ENCODE measurements at regions of chr5 and their contacts with region 1.

Region 1: DNA sequence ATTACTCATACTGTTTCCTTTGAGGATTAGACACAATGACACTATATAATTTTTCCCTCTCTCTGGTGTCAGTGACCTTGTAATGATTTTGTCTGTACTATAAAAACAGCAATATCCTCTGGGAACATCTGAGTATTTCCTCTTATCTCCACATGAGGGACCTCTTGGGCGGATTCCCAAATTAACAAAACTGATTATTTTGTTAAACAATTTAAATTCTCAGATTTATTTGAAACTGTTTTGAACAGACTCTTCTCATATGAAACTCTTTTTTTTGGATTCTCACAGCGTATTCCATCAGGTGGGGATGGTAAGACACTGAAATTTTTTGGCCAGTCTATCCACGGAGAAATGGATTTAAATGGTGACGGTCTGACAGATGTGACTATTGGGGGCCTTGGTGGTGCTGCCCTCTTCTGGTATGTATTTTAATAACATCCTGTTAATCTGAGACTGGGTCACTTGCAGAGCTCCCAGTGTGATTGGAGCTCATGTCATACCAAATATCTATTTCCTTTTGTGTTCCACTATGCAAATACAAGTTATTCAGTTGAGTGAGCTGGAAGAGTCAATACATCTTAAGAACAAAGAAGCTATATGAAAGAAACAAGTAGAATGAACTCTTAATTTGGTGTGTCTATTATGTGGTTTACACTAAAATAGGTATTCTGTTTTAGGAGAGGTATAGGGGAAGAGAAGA is 73.8 kb upstream of the ITGA2 start:
- DNase-seq: peak; percentile 79
- ATAC-seq: peak; percentile 98
- H3K4me3 ChIP-seq: peak overlapping the region; percentile 6 to 33; a peak in 2 of 4 replicates
- H3K27ac ChIP-seq: no peak overlapping the region
- H3K4me1 ChIP-seq: no peaks in the 10 kb centered on the region; the same call in 1 of the 2 replicates
- H3K27me3 ChIP-seq: no peaks in the 10 kb centered on the region
- CTCF ChIP-seq: peak; percentile 91

Region 2: DNA sequence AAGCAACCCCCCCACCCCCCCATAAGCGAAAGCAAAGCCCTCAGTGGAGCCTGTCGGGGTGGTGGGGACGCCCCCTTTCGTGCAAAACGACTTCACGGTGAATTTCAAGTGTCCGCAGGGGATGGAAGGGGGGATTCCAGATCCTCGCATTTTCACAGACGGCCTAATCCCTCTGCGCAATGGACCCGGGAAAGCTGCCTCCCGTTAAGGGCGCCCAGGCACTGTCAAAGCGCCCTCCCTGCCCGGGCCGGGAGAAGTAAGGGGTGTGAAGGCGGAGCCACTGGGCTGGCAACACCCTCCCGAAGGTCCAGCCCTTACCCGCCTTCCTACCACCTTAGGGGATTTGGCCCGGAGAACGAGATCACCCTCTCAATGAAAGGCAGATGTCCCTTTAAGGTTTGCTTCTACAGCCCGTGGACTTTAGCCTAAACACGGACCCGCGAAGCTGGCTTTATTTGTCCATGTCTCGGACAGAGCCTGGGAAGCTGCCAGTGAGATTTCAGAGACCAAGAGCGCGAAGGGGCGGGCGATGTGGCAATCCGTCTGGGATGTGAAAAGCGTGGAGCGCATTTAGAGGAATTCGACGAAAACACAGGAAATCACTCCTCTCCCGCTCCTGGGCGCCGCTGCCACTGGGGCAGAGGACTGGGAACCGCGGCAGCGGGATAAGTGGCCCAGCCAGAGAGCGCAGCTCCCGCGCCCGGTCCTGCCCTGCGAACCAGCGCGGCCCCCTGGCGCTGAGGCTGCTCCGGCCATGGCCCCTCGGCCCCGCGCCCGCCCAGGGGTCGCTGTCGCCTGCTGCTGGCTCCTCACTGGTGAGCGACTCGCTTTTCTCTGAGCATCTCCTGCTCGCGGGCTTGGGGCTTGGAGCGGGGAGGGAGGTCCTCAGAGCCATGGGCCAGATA is 127.5 kb before region 1 on chr5 and contains the starts of genes ITGA1 and PELO:
- CTCF ChIA-PET with region 1: no interaction called
- POLR2A ChIA-PET with region 1: no interaction called
- in situ Hi-C with region 1: no loop called
- intact Hi-C with region 1: loop called (anchors 5 kb)
- DNase-seq: no peak
- ATAC-seq: peak; percentile 97
- H3K4me3 ChIP-seq: peak within 1 kb of the TSS; percentile 58 to 63
- H3K27ac ChIP-seq: no peak within 1 kb of the TSS
- H3K4me1 ChIP-seq: peaks cover 5% of the 10 kb centered on the region; the same call in 1 of the 2 replicates
- H3K27me3 ChIP-seq: peaks cover 23% of the 10 kb centered on the region
- CTCF ChIP-seq: peak; percentile 45
- total RNA-seq, gene ITGA1: 1.6 TPM
- total RNA-seq, gene PELO: 12.4 TPM